Left colon (tissue), 2 donors: ENCODE measurements at regions of chr12 and their contacts with region 1.

Region 1: GRCh38 chr12:4857472-4858291 is 52.0 kb upstream of the KCNA1 start:
- DNase-seq: peak; percentile 58 to 81
- ATAC-seq: peak; percentile 86

Region 2: GRCh38 chr12:5003020-5003666 is 145.5 kb after region 1 on chr12:
- intact Hi-C with region 1: loop called (anchors 5 to 10 kb)
- DNase-seq: peak; percentile 39 to 69
- ATAC-seq: peak; percentile 98